Calu3 (cell line): ENCODE measurements at regions of chr5 and their contacts with region 1.

Region 1: GRCh38 chr5:39100851-39101396 is 26.7 kb upstream of the RICTOR start:
- DNase-seq: peak; percentile 65
- H3K4me3 Mint-ChIP-seq: no peak overlapping the region
- H3K27ac Mint-ChIP-seq: peak overlapping the region; percentile 33
- H3K4me1 Mint-ChIP-seq: peaks cover 55% of the 10 kb centered on the region
- H3K27me3 Mint-ChIP-seq: no peaks in the 10 kb centered on the region
- CTCF ChIP-seq: no peak

Region 2: DNA sequence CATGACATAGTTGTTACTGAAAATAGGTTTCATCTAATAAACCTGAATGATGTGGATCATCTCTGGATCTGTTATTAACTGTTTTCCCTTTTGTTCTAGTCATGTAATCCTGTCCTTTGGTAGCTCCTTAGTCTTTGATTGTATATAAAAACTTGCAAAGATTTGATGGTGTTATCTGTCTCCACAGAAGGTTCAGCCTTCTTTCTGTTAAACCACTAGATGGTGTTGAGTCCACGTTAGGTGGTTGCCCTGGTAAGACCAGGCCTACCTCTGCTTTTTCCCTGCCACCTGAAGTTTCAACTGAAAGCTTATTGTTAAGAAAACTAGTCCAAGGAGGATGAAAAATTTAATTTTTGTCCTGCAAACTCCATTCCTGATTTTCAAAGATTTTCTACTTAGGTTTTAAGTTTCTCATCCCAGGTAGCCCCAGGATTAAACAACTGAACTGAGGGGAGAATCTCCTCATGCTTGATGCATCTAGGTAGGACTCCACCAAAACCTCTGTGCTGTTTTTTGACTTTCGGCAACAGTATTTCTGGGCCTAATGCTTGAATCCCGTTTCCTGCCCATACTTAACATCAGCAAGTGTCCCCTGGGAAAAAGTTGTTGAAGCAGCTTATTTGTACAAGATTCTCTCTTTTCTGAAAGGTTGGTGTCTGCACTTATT is 95.2 kb before region 1 on chr5:
- CTCF ChIA-PET with region 1: no interaction called
- intact Hi-C with region 1: loop called (anchors 10 kb)
- DNase-seq: peak; percentile 12
- H3K4me3 Mint-ChIP-seq: no peak overlapping the region
- H3K27ac Mint-ChIP-seq: peak overlapping the region; percentile 30
- H3K4me1 Mint-ChIP-seq: no peaks in the 10 kb centered on the region
- H3K27me3 Mint-ChIP-seq: no peaks in the 10 kb centered on the region
- CTCF ChIP-seq: no peak

Region 3: GRCh38 chr5:39360471-39361111 is 259.7 kb after region 1 on chr5:
- CTCF ChIA-PET with region 1: no interaction called
- intact Hi-C with region 1: no loop called
- DNase-seq: no peak
- H3K4me3 Mint-ChIP-seq: peak overlapping the region; percentile 42
- H3K27ac Mint-ChIP-seq: peak overlapping the region; percentile 95
- H3K4me1 Mint-ChIP-seq: peaks cover 29% of the 10 kb centered on the region
- H3K27me3 Mint-ChIP-seq: no peaks in the 10 kb centered on the region
- CTCF ChIP-seq: no peak